Sciatic nerve (tissue), 2 donors: ENCODE measurements at regions of chr1 and their contacts with region 1.

Region 1: DNA sequence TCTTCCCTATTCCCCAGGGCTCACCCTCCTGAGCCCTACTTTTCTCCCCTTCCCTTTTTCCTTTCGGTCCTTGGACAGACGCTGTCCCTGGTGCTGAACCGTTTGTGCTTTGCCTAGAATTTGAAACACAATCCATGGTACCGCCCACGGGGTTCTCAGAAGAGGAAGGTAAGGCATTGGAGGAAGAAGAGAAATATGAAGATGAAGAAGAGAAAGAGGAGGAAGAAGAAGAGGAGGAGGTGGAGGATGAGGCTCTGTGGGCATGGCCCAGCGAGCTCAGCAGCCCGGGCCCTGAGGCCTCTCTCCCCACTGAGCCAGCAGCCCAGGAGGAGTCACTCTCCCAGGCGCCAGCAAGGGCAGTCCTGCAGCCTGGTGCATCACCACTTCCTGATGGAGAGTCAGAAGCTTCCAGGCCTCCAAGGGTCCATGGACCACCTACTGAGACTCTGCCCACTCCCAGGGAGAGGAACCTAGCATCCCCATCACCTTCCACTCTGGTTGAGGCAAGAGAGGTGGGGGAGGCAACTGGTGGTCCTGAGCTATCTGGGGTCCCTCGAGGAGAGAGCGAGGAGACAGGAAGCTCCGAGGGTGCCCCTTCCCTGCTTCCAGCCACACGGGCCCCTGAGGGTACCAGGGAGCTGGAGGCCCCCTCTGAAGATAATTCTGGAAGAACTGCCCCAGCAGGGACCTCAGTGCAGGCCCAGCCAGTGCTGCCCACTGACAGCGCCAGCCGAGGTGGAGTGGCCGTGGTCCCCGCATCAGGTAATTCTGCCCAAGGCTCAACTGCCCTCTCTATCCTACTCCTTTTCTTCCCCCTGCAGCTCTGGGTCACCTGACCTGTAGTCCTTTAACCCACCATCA is 10.4 kb downstream of the BCAN start:
- DNase-seq: no peak
- ATAC-seq: no peak

Region 2: GRCh38 chr1:156625436-156626078 is 26.8 kb before region 1 on chr1:
- intact Hi-C with region 1: loop called (anchors 2 kb)
- DNase-seq: peak; percentile 79
- ATAC-seq: peak; percentile 66